ENCODE measurements at regions of chr4 and their contacts with region 1.

Region 1: DNA sequence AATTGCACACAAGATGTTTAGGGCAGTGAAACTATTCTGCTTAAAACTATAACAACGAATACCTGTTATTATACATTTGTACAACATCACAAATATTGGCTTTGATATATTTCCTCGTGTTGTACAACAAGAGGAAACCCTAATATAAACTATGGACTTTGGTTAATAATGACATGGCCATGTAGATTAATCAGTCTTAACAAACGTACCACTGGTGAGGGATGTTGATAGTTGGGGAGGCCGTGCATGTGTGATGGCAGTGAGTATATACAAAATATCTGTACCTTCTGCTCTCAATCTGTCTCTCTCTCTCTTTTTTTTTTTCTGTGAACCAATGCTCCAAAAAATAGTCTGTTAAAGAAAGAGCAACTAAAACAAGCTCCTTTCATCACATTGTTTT is 22.2 kb upstream of the HPGD start:
- DNase-seq: no peak
- H3K4me3 ChIP-seq: no peak overlapping the region
- H3K27ac ChIP-seq: no peak overlapping the region
- H3K27me3 ChIP-seq: no peaks in the 10 kb centered on the region
- CTCF ChIP-seq: no peak

Region 2: DNA sequence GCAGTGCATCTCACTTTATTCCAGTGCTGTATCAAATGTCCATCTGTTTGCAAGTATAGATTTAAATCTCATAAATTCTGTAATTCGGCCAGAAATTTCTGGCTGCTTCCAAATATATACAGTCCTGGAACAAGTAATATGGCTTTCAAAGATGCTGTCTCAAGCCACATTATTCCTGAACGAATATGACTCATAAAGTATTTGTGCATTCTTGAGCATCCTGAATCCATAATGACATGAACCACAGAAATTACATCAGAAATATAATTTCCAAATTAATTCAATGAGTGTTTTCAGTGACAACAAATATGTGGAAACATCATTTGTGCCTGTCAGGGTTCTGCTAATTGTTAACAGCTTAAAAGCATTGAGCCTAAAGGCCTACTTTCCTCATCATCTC is 118.7 kb after region 1 on chr4:
- CTCF ChIA-PET with region 1: interaction called, 10 read pairs
- POLR2A ChIA-PET with region 1: no interaction called
- DNase-seq: no peak
- H3K4me3 ChIP-seq: no peak overlapping the region
- H3K27ac ChIP-seq: no peak overlapping the region
- H3K27me3 ChIP-seq: no peaks in the 10 kb centered on the region
- CTCF ChIP-seq: no peak